Lower leg skin (tissue), 4 donors: ENCODE measurements at regions of chr3 and their contacts with region 1.

Region 1: DNA sequence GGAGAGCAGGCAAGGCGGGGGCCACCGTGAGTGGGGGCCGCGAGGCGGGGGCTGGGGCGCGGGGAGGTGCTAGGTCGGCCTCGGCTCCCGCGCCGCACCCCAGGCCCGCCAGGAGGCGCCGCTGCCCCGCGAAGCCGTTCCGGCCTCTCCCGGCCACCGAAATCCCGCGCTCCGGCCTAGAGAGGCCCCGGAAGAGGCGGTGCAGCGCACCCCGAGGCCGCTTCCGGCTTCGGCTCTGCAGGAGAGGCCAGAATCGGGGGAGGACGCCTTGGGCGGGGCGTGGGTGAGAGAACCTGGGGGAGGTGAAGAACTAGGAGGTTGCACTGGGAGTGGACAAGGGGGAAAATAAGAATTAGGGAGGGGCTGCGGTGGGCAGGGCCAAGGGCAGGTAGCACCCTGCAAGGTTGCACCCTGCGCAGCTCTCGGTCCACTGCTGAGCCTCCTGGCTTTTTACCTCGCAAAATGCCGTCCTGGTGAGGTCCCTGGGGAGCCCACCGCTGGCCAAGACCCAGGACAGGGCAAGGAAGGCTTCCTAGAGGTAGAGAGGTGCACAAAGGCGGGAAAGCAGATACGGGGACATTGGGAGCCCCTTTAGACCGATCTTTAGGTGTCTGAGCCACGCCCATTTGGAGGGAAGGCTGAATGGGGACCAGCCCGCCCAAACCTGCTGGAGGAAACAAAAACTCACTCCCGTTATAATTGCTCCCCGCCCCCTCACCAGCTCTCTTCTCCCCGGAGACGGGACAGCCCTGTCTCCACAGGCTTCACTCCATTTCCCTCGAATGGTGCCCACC is 8.4 kb upstream of the GNAI2 start:
- DNase-seq: peak; percentile 90 to 97
- H3K4me3 ChIP-seq: peak overlapping the region; percentile 56
- CTCF ChIP-seq: peak in 2 of 3 donors; percentile 10 to 42
- POLR2A ChIP-seq: no peak

Region 2: DNA sequence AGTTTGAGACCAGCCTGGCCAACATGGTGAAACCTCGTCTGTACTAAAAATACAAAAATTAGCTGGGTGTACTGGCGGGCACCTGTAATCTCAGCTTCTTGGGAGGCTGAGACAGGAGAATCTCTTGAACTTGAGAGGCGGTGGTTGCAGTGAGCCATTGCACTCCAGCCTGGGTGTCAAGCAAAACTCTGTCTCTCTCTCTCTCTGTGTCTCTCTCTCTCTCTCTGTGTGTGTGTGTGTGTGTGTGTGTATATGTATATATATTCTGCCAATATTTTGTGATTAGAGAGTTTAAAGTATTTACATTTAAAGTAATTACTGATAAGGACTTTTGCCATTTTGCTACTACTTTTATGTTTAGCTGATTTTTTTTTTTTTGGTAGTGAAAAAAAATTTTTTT is 272.0 kb before region 1 on chr3:
- intact Hi-C with region 1: no loop called
- DNase-seq: no peak
- H3K4me3 ChIP-seq: no peak overlapping the region
- CTCF ChIP-seq: no peak
- POLR2A ChIP-seq: no peak

Region 3: GRCh38 chr3:50192689-50193141 is 34.9 kb before region 1 on chr3:
- intact Hi-C with region 1: loop called (anchors 1 kb)
- DNase-seq: peak; percentile 62 to 96
- H3K4me3 ChIP-seq: no peak overlapping the region
- CTCF ChIP-seq: peak in 1 of 3 donors; percentile 62
- POLR2A ChIP-seq: no peak

Region 4: DNA sequence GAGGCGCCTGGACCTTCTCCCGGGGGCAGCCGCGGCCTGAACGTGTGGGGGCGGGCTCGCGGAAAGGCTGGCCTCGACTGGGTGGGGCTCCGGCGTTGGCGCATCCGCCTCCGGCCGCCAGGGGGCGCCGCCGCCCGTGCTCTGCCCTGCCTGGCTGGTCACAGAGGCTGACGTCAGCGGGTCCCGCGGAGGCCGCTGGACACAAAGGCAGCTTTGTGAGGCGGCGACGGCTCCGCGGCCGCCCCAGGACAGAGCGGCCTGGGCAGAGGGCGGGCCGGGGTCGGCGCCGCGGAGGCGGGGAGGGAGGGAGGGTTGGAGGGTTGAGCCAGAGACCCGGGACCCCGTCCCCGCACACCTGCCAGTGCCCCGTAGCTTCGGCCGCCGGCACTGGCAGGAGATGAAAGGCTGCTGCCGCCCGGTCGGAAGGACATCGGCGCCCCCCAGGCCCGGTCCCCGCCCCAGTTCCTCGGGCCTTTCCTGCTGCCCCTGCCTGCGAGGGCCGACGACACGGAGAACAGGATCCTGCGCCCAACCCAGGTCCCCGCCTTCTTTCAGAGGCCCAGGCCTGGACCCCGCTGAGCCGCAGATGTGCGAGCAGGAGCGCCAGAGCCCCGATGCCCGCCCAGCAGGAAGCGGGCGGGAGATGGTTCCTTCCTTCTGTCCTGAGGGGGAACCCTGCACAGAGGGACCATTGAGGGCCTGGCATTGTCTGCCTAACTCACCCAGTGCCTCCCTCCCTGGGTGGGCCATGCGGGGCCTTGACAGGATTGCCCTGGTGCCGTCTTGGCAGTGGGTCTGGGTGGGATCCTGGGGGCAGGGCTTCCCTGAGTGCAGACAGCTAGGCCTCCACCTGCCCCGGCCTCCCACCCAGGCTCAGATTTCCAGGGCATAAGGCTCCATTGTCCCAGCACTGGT is 32.7 kb after region 1 on chr3:
- intact Hi-C with region 1: no loop called
- DNase-seq: peak; percentile 88 to 99
- H3K4me3 ChIP-seq: no peak overlapping the region
- CTCF ChIP-seq: peak in 1 of 3 donors; percentile 90
- POLR2A ChIP-seq: no peak

Region 5: DNA sequence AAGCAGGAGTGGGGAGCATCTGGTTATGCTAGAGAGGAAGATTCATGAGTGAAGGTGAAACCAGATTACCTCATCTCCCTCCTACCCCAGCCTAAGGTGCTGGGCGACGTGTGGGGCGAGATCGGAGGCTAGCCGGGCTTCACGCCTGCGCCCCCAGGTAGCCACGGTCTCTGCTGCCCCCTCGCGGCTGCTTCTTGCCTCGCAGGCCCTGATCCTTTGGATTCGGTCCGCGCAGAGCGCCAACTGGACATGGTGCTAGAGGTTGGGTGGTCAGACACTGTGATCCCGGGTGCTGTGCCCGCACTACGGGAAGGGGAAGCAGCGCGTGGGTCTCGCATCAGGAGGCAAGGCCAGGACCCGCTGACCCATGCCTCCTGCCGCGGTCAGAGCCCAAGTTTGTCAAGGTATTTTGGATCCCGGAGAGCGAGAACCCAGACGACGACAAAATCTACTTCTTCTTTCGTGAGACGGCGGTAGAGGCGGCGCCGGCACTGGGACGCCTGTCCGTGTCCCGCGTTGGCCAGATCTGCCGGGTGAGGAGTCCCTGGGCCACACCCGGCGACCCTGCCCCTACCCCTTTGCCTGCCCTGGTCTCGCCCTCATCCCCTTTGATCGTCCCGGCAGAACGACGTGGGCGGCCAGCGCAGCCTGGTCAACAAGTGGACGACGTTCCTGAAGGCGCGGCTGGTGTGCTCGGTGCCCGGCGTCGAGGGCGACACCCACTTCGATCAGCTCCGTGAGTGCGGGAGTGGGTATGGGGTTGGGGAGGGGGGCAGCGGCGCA is 45.5 kb after region 1 on chr3:
- intact Hi-C with region 1: loop called (anchors 2 kb)
- DNase-seq: peak; percentile 79 to 97
- H3K4me3 ChIP-seq: no peak overlapping the region
- CTCF ChIP-seq: peak in 1 of 3 donors; percentile 98
- POLR2A ChIP-seq: no peak